ENCODE measurements at regions of chr17 and their contacts with region 1.

Region 1: DNA sequence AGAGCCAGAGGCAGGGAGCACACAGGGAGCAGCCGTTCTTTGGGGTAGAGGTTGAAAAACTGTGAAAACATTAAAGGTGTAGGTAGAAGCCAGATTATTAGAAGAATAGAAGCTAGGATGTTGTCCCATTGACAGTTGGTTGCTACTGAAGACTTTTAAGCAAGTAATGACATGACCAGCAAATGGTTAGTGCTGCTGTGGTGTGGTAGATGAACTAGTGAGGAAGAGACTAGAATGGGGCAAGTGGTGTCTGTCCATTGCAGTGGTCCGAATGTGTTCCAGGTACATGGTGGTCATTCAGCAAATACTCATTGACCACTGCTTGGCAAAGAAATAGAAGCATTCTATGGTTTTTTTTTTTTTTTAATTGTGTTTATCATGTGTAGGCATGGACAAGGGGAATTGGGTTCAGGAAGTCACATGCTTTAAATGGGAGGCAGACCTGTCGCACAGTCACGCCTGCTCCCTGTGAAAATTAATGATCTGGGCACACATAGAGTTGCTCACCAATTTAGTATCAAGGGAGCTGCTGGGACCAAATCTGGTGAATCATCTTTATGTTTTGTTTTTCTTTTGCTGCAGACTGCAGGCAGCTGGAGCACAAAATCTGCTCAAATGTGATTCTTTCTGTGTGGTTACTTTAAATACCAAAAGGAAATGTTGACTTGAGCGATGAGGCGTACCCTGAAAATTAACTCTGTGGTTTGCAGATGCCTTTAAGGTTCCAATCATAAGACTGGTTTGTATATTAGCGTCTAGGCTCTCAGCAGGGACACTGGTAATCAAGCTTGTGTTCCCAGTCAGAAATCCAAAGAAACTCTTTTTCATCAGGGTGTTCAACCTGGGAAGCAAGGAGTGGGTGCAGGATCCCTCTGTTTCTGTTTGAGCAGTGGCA is 30.7 kb downstream of the YPEL2 start:
- DNase-seq: peak; percentile 63
- ATAC-seq: peak; percentile 79
- H3K4me3 ChIP-seq: peak overlapping the region; percentile 18 to 59 (median 24)
- H3K4me3 Mint-ChIP-seq: peak overlapping the region; percentile 91
- H3K27ac ChIP-seq: peak overlapping the region; percentile 69 to 73
- H3K27ac Mint-ChIP-seq: peak overlapping the region; percentile 67
- H3K4me1 ChIP-seq: peaks cover 79 to 85% of the 10 kb centered on the region in 2 donors
- H3K4me1 Mint-ChIP-seq: peaks cover 79% of the 10 kb centered on the region
- H3K27me3 ChIP-seq: no peaks in the 10 kb centered on the region
- H3K27me3 Mint-ChIP-seq: no peaks in the 10 kb centered on the region
- CTCF ChIP-seq: no peak

Region 2: GRCh38 chr17:59347975-59348391 is 14.2 kb before region 1 on chr17:
- CTCF ChIA-PET with region 1: interaction called, 5 read pairs
- POLR2A ChIA-PET with region 1: interaction called, 27 read pairs
- intact Hi-C with region 1: loop called (anchors 2 kb)
- DNase-seq: no peak
- ATAC-seq: no peak
- H3K4me3 ChIP-seq: no peak overlapping the region
- H3K4me3 Mint-ChIP-seq: no peak overlapping the region
- H3K27ac ChIP-seq: peak overlapping the region in 1 of 2 donors; percentile 11
- H3K27ac Mint-ChIP-seq: peak overlapping the region; percentile 61
- H3K4me1 ChIP-seq: peaks cover 54 to 63% of the 10 kb centered on the region in 2 donors
- H3K4me1 Mint-ChIP-seq: peaks cover 79% of the 10 kb centered on the region
- H3K27me3 ChIP-seq: no peaks in the 10 kb centered on the region
- H3K27me3 Mint-ChIP-seq: no peaks in the 10 kb centered on the region
- CTCF ChIP-seq: no peak

Region 3: DNA sequence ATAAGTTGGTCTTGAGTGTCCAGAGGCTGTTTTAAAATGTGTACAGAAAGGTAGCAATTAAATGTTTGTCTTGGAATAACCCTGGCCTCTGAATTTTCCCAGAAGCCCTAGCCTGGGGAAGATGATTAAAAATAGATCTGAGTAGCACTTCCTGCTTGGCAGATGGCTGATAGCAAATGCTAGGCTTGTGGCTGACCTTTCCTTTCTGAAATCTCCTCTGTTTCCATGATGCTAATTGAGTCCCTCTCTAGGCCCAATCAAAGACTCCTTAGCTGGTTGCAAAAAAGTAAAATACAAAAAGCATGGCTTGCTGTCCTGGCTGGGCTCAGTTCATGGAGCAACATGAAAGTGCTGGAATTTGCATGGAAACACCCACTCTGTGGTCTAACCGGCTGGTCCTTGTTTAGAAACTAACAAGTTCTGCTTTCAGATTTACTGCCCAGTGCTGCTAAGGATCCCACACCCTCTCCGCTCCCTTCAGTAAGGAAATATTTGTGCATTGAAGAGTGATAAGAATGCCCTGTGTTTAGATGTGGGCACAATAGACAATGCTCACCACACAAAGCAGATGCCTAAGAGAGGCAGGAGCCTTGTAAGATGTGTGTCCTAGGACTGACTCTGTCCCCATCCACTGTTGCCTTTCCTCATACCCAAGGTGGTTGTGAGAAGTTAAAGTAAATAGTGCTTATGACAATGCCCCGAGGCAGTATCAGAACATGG is 10.1 kb after region 1 on chr17:
- CTCF ChIA-PET with region 1: interaction called, 11 read pairs
- POLR2A ChIA-PET with region 1: interaction called, 13 read pairs
- intact Hi-C with region 1: loop called (anchors 1 kb)
- DNase-seq: peak; percentile 40
- ATAC-seq: peak; percentile 46
- H3K4me3 ChIP-seq: peak overlapping the region in 2 of 5 experiments; percentile 2 to 46
- H3K4me3 Mint-ChIP-seq: peak overlapping the region; percentile 66
- H3K27ac ChIP-seq: peak overlapping the region; percentile 55 to 71
- H3K27ac Mint-ChIP-seq: peak overlapping the region; percentile 88
- H3K4me1 ChIP-seq: peaks cover 69 to 94% of the 10 kb centered on the region in 2 donors
- H3K4me1 Mint-ChIP-seq: peaks cover 82% of the 10 kb centered on the region
- H3K27me3 ChIP-seq: no peaks in the 10 kb centered on the region
- H3K27me3 Mint-ChIP-seq: no peaks in the 10 kb centered on the region
- CTCF ChIP-seq: no peak

Region 4: GRCh38 chr17:59435238-59435637 is 73.1 kb after region 1 on chr17:
- CTCF ChIA-PET with region 1: interaction called, 12 read pairs
- POLR2A ChIA-PET with region 1: no interaction called
- intact Hi-C with region 1: loop called (anchors 2 kb)
- DNase-seq: no peak
- ATAC-seq: no peak
- H3K4me3 ChIP-seq: no peak overlapping the region
- H3K4me3 Mint-ChIP-seq: no peak overlapping the region
- H3K27ac ChIP-seq: no peak overlapping the region
- H3K27ac Mint-ChIP-seq: no peak overlapping the region
- H3K4me1 ChIP-seq: peaks cover 31% of the 10 kb centered on the region in 2 donors
- H3K4me1 Mint-ChIP-seq: peaks cover 30% of the 10 kb centered on the region
- H3K27me3 ChIP-seq: no peaks in the 10 kb centered on the region
- H3K27me3 Mint-ChIP-seq: no peaks in the 10 kb centered on the region
- CTCF ChIP-seq: no peak

Region 5: DNA sequence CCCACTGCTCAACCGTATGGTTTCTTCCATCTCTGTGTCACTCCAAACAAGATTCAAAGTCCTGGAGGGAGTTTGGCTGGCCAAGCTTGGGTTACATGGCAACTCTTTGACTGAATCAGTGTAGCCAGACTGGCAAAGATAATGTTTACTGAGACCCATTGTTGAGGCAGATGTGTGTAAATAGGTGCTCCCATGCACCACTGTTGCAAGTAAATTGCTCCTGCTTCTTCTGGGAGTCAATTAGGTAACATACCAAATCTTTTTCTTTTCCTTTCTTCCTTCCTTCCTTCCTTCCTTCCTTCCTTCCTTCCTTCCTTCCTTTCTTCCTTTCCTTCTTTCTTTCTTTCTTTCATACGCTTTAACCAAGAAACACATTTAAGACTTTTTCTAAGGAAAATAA is 117.0 kb after region 1 on chr17:
- CTCF ChIA-PET with region 1: no interaction called
- POLR2A ChIA-PET with region 1: no interaction called
- intact Hi-C with region 1: no loop called
- DNase-seq: no peak
- ATAC-seq: no peak
- H3K4me3 ChIP-seq: no peak overlapping the region
- H3K4me3 Mint-ChIP-seq: no peak overlapping the region
- H3K27ac ChIP-seq: no peak overlapping the region
- H3K27ac Mint-ChIP-seq: no peak overlapping the region
- H3K4me1 ChIP-seq: peaks cover 0 to 3% of the 10 kb centered on the region in 2 donors
- H3K4me1 Mint-ChIP-seq: peaks cover 2% of the 10 kb centered on the region
- H3K27me3 ChIP-seq: peaks cover 0 to 9% (median 0%) of the 10 kb centered on the region in 4 experiments
- H3K27me3 Mint-ChIP-seq: peaks cover 9% of the 10 kb centered on the region
- CTCF ChIP-seq: no peak